ENCODE measurements at regions of chr3 and their contacts with region 1.

Region 1: GRCh38 chr3:135944831-135945592 is 20.5 kb upstream of the PPP2R3A start:
- DNase-seq: no peak
- ATAC-seq: no peak
- H3K4me3 ChIP-seq: no peak overlapping the region
- H3K27ac ChIP-seq: no peak overlapping the region
- H3K4me1 ChIP-seq: no peaks in the 10 kb centered on the region
- H3K27me3 ChIP-seq: peaks cover 4% of the 10 kb centered on the region; the same call in 1 of the 2 replicates
- CTCF ChIP-seq: no peak

Region 2: DNA sequence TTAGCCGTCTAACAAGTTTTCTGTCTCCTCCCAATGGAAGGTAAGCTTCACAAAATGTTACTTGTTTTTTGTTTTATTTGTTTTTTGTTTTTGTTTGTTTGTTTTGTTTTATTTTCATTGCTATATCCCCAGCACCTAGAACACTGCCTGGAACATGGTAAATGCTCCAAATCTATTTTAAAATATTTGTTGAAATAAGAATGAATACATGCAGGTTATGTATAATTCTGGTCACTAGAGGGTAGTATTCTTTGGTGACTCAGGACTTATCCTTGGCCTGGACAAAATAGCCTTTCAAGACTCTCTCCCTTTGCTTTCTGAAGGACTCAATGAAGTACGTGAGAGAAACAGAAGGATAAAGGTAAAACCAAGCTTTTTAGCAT is 26.4 kb before region 1 on chr3:
- CTCF ChIA-PET with region 1: no interaction called
- POLR2A ChIA-PET with region 1: interaction called, 11 read pairs
- in situ Hi-C with region 1: no loop called
- intact Hi-C with region 1: no loop called
- DNase-seq: no peak
- ATAC-seq: peak; percentile 73
- H3K4me3 ChIP-seq: no peak overlapping the region
- H3K27ac ChIP-seq: no peak overlapping the region
- H3K4me1 ChIP-seq: no peaks in the 10 kb centered on the region
- H3K27me3 ChIP-seq: no peaks in the 10 kb centered on the region
- CTCF ChIP-seq: peak; percentile 60; the same call in 1 of the 2 replicates

Measured in Panc1 (cell line).